CD14-positive monocyte (primary cell): ENCODE measurements at regions of chr5 and their contacts with region 1.

Region 1: DNA sequence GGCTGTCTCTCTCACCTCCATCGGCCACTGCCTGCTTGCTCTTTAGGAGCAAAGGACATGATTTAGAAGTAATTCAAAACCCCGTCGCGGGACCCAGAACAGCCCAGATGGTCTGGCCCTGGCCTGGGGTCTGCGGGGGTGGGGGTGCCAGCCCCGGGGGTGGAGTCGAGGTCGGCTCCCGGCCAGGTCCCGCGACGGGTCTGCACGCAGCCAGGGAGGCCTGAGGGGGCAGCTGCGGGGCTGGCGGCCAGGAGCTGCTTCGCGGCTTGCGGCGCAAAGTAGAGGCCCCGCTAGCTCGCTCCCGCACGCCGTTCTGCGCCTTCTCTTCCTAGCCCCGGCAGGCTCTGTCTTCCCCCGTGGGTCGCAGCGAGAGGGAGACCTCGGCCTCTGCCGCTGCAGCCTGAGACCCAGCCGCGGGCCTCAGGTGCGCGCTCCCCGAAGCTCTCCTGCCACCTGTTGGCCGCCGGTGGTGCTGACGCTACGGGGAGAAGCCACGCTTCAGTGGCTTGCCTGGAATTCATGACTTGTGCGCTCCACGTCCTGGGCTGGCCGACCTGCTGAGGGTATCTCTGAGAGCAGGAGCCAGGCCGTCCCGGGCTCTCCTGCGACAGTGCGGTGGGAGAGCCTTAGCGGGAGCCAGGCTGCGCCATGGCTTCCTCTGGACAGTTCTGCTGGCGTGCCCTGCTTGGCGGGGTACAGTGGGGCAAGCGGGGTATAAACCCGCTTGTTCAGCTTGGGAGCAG is 157.2 kb upstream of the PITX1 start:
- DNase-seq: peak; percentile 50 to 65 (median 51)
- H3K4me3 ChIP-seq: peak overlapping the region; percentile 16 to 67 (median 22)
- H3K4me3 Mint-ChIP-seq: peak overlapping the region; percentile 66 to 91
- H3K27ac ChIP-seq: no peak overlapping the region
- H3K27ac Mint-ChIP-seq: no peak overlapping the region
- H3K4me1 ChIP-seq: peaks cover 9 to 10% of the 10 kb centered on the region in 2 donors
- H3K4me1 Mint-ChIP-seq: peaks cover 9% of the 10 kb centered on the region
- H3K27me3 ChIP-seq: peaks cover 22 to 58% of the 10 kb centered on the region in 2 donors
- H3K27me3 Mint-ChIP-seq: peaks cover 41 to 74% (median 45%) of the 10 kb centered on the region in 3 donors
- CTCF ChIP-seq: peak; percentile 95

Region 2: GRCh38 chr5:135034236-135034962 is 156.9 kb before region 1 on chr5:
- intact Hi-C with region 1: loop called in 1 of 2 experiments (anchors 10 kb)
- DNase-seq: no peak
- H3K4me3 ChIP-seq: no peak overlapping the region
- H3K4me3 Mint-ChIP-seq: peak overlapping the region; percentile 64 to 84
- H3K27ac ChIP-seq: no peak overlapping the region
- H3K27ac Mint-ChIP-seq: no peak overlapping the region
- H3K4me1 ChIP-seq: peaks cover 12 to 28% of the 10 kb centered on the region in 2 donors
- H3K4me1 Mint-ChIP-seq: peaks cover 33% of the 10 kb centered on the region
- H3K27me3 ChIP-seq: peaks cover 77 to 89% of the 10 kb centered on the region in 2 donors
- H3K27me3 Mint-ChIP-seq: peaks cover 88 to 94% (median 90%) of the 10 kb centered on the region in 3 donors
- CTCF ChIP-seq: no peak

Region 3: GRCh38 chr5:135276151-135276550 is 84.9 kb after region 1 on chr5:
- intact Hi-C with region 1: no loop called
- DNase-seq: no peak
- H3K4me3 ChIP-seq: no peak overlapping the region
- H3K4me3 Mint-ChIP-seq: no peak overlapping the region
- H3K27ac ChIP-seq: no peak overlapping the region
- H3K27ac Mint-ChIP-seq: no peak overlapping the region
- H3K4me1 ChIP-seq: no peaks in the 10 kb centered on the region
- H3K4me1 Mint-ChIP-seq: peaks cover 5% of the 10 kb centered on the region
- H3K27me3 ChIP-seq: no peaks in the 10 kb centered on the region
- H3K27me3 Mint-ChIP-seq: peaks cover 3 to 12% (median 7%) of the 10 kb centered on the region in 3 donors
- CTCF ChIP-seq: no peak